ENCODE measurements at regions of chr19 and their contacts with region 1.

Region 1: DNA sequence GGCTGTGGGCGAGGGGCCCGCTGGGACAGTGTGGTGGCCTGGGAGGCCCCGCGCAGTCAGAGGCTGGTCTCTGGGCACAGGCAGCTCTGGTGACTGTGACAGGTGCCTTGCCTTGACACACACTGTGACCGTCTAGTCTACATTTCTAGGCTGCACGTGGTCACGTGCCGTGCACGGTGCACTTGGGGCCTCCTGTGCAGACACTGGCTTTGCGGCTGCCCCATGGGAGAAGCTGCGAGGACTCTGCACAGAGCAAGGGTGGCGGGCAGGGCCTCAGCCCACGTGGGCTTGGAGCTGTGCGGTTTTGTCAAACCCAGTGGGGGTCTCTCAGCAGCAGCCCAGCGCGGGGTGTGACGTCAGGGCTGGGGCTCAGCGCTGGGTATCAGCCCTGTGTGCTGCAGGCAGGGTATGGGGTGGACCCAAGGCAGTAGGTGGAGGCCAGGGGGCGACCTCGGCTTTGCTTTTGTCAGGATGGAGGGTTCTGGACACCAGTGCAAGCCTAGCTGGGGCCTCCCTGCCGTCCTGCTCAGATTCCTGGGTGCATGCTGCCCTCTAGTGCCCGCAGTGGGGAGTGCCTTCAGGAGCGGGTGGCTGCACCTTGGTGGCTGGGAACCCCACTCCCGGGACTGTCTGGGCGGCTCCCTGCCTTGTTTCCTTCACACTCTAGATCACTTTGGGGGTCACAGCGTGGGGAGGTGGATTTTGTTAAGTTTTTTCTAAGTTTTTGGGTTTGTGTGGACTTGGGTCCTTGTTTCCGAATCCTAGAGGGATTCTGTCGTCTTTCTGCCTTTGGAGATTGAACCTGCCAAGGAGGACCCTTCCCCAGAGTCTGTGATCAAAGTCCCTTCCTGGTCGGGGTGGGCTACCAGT is 62.6 kb downstream of the KDM4B start:
- DNase-seq: no peak
- H3K4me3 ChIP-seq: no peak overlapping the region
- CTCF ChIP-seq: peak; percentile 98

Region 2: GRCh38 chr19:4909897-4910593 is 121.4 kb before region 1 on chr19:
- CTCF ChIA-PET with region 1: interaction called, 82 read pairs
- POLR2A ChIA-PET with region 1: interaction called, 4 read pairs
- DNase-seq: no peak
- H3K4me3 ChIP-seq: peak overlapping the region; percentile 70
- CTCF ChIP-seq: no peak

Region 3: GRCh38 chr19:4980810-4981680 is 50.4 kb before region 1 on chr19:
- CTCF ChIA-PET with region 1: interaction called, 10 read pairs
- POLR2A ChIA-PET with region 1: no interaction called
- DNase-seq: no peak
- H3K4me3 ChIP-seq: no peak overlapping the region
- CTCF ChIP-seq: no peak

Region 4: GRCh38 chr19:5018224-5019015 is 13.0 kb before region 1 on chr19:
- CTCF ChIA-PET with region 1: interaction called, 92 read pairs
- POLR2A ChIA-PET with region 1: no interaction called
- DNase-seq: no peak
- H3K4me3 ChIP-seq: no peak overlapping the region
- CTCF ChIP-seq: no peak

Measured in AG04449 (cell line).